ENCODE measurements at regions of chr3 and their contacts with region 1.

Region 1: DNA sequence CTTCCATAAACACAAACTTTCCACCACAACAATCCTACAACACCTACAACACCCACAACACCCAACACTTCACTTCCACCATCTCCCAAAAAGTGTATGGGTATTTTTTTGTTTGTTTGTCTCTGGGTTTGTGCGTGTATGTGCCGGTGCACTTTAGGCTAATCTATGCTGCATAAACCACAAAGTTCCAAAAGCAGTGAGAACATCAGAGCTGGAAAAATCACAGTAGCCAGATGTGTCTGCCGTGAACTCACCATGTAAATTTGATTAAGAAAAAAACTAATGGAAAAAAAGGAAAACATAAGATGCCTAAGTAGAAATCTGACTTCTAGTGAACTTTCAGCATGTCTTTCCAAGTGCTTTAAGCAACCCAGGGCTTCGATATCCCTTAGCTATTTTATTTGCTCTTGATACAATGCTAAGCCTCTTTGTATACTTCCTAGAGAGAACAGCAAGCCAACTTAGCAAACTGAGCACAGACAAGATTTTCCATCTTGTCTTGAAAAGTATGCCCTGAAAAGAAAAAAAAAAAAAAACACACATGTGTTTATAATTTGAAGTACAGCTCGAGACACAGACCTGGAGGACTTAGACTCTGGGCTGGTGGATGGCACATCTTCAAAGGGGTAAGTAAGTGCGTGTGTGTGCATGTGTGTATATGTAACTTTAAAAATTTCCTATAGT is 91.4 kb downstream of the WWTR1 start:
- DNase-seq: no peak
- ATAC-seq: no peak
- H3K4me3 ChIP-seq: no peak overlapping the region
- H3K27ac ChIP-seq: no peak overlapping the region
- H3K4me1 ChIP-seq: peaks cover 7% of the 10 kb centered on the region
- H3K27me3 ChIP-seq: no peaks in the 10 kb centered on the region
- CTCF ChIP-seq: no peak

Region 2: DNA sequence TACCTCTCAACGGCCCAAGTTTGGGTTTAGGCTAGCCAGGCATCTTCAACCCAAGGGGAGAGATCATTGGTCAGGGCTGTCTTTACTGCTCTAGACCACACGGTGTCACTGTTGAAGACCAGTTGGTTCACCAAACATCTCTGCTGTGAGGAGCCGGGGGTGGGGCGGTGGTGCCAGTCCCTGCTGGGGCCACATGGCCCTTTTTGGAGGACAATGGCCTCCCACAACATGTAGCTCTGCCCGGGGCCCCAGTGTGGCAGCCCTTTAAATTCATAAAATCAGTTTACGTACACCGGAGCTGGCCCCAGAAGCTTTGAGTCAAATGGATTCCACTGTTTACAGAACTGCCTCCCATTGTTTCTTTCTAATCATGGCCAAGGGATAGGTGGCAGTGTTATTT is 213.9 kb before region 1 on chr3:
- CTCF ChIA-PET with region 1: no interaction called
- POLR2A ChIA-PET with region 1: no interaction called
- intact Hi-C with region 1: no loop called
- DNase-seq: peak; percentile 84
- ATAC-seq: peak; percentile 93
- H3K4me3 ChIP-seq: no peak overlapping the region
- H3K27ac ChIP-seq: peak overlapping the region; percentile 38
- H3K4me1 ChIP-seq: peaks cover 9% of the 10 kb centered on the region; the same call in 1 of the 2 replicates
- H3K27me3 ChIP-seq: no peaks in the 10 kb centered on the region
- CTCF ChIP-seq: peak; percentile 91

Region 3: DNA sequence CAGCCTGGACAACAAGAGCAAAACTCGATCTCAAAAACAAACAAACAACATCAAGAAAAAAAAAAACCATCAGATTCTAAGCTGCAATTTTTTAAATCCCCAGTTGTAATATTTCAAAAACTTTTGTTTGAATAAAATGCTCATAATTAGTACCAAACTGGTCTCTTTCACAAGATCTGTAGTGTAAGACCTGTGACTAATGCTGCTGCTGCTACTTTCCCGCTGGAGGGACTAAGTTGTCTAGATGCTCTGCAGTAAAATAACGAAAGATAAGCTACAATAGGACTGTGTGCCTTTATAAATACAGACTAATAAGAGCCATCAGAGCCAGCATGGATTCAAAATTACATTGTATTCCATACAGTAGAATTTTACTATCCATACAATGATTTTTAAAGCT is 46.5 kb before region 1 on chr3:
- CTCF ChIA-PET with region 1: no interaction called
- POLR2A ChIA-PET with region 1: no interaction called
- intact Hi-C with region 1: no loop called
- DNase-seq: no peak
- ATAC-seq: no peak
- H3K4me3 ChIP-seq: no peak overlapping the region
- H3K27ac ChIP-seq: no peak overlapping the region
- H3K4me1 ChIP-seq: no peaks in the 10 kb centered on the region
- H3K27me3 ChIP-seq: no peaks in the 10 kb centered on the region
- CTCF ChIP-seq: no peak

Region 4: DNA sequence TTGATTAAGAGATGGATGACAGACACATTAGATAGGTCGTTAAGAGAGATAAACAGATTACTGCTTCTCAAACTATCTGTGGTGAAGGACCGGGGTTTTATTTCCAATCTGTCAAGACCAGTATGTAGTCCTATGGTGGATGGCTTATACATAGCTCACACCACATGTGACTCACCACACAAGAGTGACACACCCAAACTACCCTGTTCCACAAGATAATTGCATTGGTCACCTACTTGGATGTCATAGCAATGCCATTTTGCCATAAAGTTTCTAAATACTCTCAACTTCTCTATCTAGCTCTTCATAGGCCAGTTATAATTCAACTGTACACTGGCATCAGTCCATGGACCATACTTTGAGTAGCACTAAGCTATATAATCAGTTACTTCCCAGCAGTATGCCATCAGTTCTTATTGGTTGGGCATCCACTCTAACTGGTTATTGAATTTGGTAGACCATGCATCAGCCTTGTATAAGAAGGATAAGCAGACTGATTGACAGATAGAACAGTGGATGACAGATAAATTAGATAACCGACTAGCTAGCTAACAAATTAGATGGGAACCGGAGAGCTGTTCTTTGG is 79.8 kb after region 1 on chr3:
- CTCF ChIA-PET with region 1: no interaction called
- POLR2A ChIA-PET with region 1: no interaction called
- intact Hi-C with region 1: no loop called
- DNase-seq: peak; percentile 89
- ATAC-seq: peak; percentile 88
- H3K4me3 ChIP-seq: no peak overlapping the region
- H3K27ac ChIP-seq: peak overlapping the region; percentile 31
- H3K4me1 ChIP-seq: peaks cover 17% of the 10 kb centered on the region
- H3K27me3 ChIP-seq: no peaks in the 10 kb centered on the region
- CTCF ChIP-seq: no peak

Region 5: DNA sequence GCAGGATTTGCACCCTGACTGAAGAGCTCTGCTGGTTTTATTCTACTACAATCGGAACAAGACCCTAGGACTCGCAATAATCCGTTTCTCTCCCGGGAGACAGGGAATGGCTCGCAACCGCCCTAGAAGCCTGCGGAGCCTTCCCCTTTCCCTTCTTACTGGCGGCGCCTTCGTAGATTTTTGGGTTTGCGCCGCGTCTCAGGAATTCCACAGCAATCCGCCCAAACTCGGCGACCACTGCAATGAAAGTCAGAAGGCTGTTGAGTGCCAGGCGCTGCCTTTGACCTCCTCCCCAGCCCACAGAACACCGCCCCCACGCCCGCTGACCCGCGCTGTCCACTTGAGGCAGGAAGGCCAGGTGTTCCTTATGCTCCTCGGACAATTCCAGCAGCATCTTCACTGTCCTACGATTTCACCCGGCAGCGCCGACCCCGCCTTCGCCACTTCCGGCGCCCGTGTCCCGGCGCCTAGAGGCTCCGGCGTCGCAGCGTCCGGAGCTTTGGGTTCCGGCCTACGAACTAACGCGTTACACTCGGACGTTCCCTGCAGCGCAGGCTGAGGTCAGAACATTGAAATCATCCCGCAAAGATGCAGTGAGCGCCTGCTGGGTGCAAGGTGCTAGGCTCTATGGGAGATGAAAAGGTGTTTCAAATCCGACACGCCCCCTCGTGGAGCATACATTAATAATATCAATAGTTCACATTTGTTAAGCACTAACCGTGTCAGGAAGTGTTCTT is 185.8 kb after region 1 on chr3 and contains the start of gene COMMD2:
- CTCF ChIA-PET with region 1: no interaction called
- POLR2A ChIA-PET with region 1: no interaction called
- intact Hi-C with region 1: loop called (anchors 5 kb)
- DNase-seq: peak; percentile 96
- ATAC-seq: peak; percentile 98
- H3K4me3 ChIP-seq: peak within 1 kb of the TSS; percentile 94
- H3K27ac ChIP-seq: peak within 1 kb of the TSS; percentile 22; the same call in 1 of the 2 replicates
- H3K4me1 ChIP-seq: peaks cover 23% of the 10 kb centered on the region
- H3K27me3 ChIP-seq: no peaks in the 10 kb centered on the region
- CTCF ChIP-seq: peak; percentile 62
- total RNA-seq, gene COMMD2: 22.7 and 24.8 TPM in 2 replicates